ENCODE measurements at regions of chr7 and their contacts with region 1.

Region 1: DNA sequence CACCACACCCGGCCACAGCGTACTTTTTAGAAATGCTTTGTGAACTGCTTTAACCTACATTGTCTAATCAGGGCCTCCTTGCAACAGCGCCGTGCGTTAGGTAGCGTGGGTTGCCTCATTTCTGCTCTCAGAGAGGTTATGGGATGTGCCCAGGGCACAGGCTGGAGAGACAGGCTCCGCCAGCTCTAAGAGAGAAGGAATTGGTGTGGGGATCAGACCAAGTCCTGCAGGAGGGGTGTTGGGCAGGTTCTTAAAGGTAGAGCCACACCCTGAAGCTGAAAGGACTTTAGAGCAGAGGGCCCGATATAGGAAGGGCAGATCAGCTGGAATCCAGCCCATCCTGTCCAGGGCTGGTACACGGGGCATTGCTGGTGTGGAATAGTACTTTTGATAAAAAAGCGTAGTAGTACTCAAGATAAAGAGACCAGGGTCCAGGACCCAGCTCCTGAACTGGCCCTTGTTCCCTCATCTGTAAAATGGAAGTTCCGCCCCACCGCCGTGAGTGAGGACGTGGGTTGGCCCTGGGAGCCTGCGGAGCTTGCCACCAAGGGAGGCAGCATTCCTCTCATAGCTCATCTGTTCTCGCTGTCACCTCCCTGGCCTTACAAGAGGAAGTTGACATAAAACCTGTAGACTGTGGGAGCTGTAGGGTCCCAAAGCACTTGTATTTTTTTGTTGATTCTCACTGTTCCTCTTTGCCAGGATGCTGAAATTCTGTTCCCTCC is 37.2 kb downstream of the TMEM120A start:
- DNase-seq: peak; percentile 91 to 96
- H3K4me3 ChIP-seq: no peak overlapping the region
- H3K4me3 Mint-ChIP-seq: peak overlapping the region; percentile 71
- H3K27ac Mint-ChIP-seq: peak overlapping the region; percentile 94
- H3K4me1 ChIP-seq: peaks cover 48% of the 10 kb centered on the region
- H3K4me1 Mint-ChIP-seq: peaks cover 15% of the 10 kb centered on the region
- H3K27me3 ChIP-seq: no peaks in the 10 kb centered on the region
- H3K27me3 Mint-ChIP-seq: no peaks in the 10 kb centered on the region
- CTCF ChIP-seq: no peak

Region 2: GRCh38 chr7:75866489-75867389 is 90.4 kb before region 1 on chr7:
- CTCF ChIA-PET with region 1: interaction called, 11 read pairs
- POLR2A ChIA-PET with region 1: no interaction called
- intact Hi-C with region 1: no loop called
- DNase-seq: peak; percentile 71 to 76
- H3K4me3 ChIP-seq: no peak overlapping the region
- H3K4me3 Mint-ChIP-seq: no peak overlapping the region
- H3K27ac Mint-ChIP-seq: no peak overlapping the region
- H3K4me1 ChIP-seq: peaks cover 9% of the 10 kb centered on the region
- H3K4me1 Mint-ChIP-seq: peaks cover 11% of the 10 kb centered on the region
- H3K27me3 ChIP-seq: no peaks in the 10 kb centered on the region
- H3K27me3 Mint-ChIP-seq: peaks cover 2% of the 10 kb centered on the region
- CTCF ChIP-seq: peak; percentile 87 to 97

Region 3: GRCh38 chr7:75878769-75879611 is 78.2 kb before region 1 on chr7 and contains the start of gene RHBDD2:
- CTCF ChIA-PET with region 1: no interaction called
- POLR2A ChIA-PET with region 1: no interaction called
- intact Hi-C with region 1: loop called (anchors 5 kb)
- DNase-seq: peak; percentile 95
- H3K4me3 ChIP-seq: peak within 1 kb of the TSS; percentile 81
- H3K4me3 Mint-ChIP-seq: peak within 1 kb of the TSS; percentile 94
- H3K27ac Mint-ChIP-seq: peak within 1 kb of the TSS; percentile 93
- H3K4me1 ChIP-seq: peaks cover 6% of the 10 kb centered on the region
- H3K4me1 Mint-ChIP-seq: peaks cover 8% of the 10 kb centered on the region
- H3K27me3 ChIP-seq: no peaks in the 10 kb centered on the region
- H3K27me3 Mint-ChIP-seq: no peaks in the 10 kb centered on the region
- CTCF ChIP-seq: peak in 1 of 2 experiments; percentile 10
- total RNA-seq, gene RHBDD2: 50.1 and 55.6 TPM in 2 replicates

Region 4: DNA sequence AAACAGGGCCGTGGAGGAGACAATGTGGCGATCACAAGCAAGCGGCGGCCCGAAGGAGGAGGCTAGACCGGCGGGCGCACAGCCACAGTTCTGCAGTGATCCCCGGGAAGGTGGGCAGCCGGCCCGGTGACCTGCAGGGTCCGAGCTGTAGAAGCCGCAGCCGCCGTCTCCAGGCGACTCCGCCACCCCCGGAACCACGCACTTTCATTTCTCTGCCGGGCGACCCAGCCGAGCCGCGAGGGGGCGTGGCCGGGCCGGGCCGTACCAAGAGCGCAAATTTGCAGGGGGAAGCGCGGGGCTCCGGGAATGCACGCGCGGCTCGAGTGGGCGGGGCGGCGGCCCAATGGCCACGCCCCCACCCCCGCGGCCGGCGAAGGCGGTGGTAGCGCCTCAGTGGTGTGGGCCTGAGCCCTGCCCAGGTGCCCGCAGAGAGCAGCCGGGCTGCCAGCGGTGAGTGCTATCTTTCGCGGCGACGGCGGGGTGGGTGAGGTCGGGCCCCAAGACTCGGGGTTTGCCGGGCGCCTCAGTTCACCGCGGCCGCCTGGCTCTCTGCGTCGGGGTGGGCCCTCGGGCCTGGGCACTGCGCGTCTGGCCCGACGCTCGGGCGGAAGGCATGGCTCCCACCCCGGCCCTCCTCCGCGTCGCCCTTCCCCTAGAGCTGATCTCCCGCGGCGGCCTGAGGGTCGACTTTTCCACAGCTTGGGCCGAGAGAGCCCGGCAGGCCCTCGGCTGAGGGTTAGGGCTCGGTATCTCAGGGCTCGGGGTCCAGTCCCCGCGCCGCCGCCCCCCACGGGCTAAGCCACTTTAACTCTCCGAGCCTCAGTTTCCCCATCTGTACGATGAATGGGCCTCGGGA is 42.2 kb before region 1 on chr7 and contains the start of gene POR:
- CTCF ChIA-PET with region 1: interaction called, 4 read pairs
- POLR2A ChIA-PET with region 1: interaction called, 5 read pairs
- intact Hi-C with region 1: loop called (anchors 2 kb)
- DNase-seq: peak; percentile 94 to 99
- H3K4me3 ChIP-seq: peak within 1 kb of the TSS; percentile 95
- H3K4me3 Mint-ChIP-seq: peak within 1 kb of the TSS; percentile 73
- H3K27ac Mint-ChIP-seq: peak within 1 kb of the TSS; percentile 63
- H3K4me1 ChIP-seq: no peaks in the 10 kb centered on the region
- H3K4me1 Mint-ChIP-seq: no peaks in the 10 kb centered on the region
- H3K27me3 ChIP-seq: no peaks in the 10 kb centered on the region
- H3K27me3 Mint-ChIP-seq: no peaks in the 10 kb centered on the region
- CTCF ChIP-seq: no peak
- total RNA-seq, gene POR: 162 and 171 TPM in 2 replicates

Region 5: DNA sequence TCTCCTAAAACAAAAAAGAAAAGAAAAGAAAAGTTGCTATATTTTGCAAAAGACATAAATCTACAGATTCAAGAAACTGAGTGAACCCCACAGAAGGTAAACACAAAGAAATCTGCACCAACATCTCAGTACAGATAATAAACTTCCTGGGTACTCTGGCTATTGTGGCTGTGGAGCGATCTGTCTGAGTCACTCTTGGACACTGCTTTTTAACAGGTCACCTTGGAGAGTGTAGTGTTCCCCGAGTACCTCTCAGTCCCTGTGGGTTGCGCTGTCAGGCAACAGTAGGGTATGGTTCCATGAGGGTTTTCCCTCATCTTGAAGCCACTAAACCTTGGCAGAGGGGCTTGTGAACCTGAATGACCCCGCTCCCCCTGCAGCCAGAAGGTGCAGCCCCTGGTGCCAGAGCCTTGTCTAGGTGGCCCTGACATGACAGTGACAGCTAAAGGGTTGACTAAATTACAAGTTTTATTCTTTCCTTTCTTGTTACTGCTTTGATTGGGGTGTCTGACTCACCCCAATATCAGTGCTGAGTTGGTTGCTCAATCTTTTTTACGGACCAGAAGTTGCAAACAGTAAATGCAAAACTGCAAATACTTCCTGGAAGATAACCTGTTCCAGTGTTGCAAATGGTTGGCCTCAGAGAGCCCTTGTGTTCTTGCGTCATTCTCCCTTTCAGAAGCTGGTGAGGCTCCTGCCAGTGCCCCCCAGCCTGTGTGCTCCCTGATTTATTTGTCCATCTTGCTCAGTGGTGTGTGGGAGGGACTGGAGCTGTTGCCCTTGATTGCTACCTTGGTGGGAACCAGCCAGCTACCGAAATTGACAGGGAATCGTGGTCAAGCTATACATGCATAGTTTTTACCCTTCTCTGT is 11.6 kb before region 1 on chr7:
- CTCF ChIA-PET with region 1: no interaction called
- POLR2A ChIA-PET with region 1: no interaction called
- intact Hi-C with region 1: no loop called
- DNase-seq: peak; percentile 44 to 53
- H3K4me3 ChIP-seq: no peak overlapping the region
- H3K4me3 Mint-ChIP-seq: no peak overlapping the region
- H3K27ac Mint-ChIP-seq: peak overlapping the region; percentile 63
- H3K4me1 ChIP-seq: peaks cover 22% of the 10 kb centered on the region
- H3K4me1 Mint-ChIP-seq: peaks cover 24% of the 10 kb centered on the region
- H3K27me3 ChIP-seq: no peaks in the 10 kb centered on the region
- H3K27me3 Mint-ChIP-seq: no peaks in the 10 kb centered on the region
- CTCF ChIP-seq: no peak

Region 6: GRCh38 chr7:75994388-75995051 is 37.3 kb after region 1 on chr7 and contains the start of gene TMEM120A:
- CTCF ChIA-PET with region 1: no interaction called
- POLR2A ChIA-PET with region 1: interaction called, 3 read pairs
- intact Hi-C with region 1: loop called (anchors 1 kb)
- DNase-seq: peak; percentile 96 to 98
- H3K4me3 ChIP-seq: peak within 1 kb of the TSS; percentile 89
- H3K4me3 Mint-ChIP-seq: peak within 1 kb of the TSS; percentile 80
- H3K27ac Mint-ChIP-seq: peak within 1 kb of the TSS; percentile 87
- H3K4me1 ChIP-seq: peaks cover 40% of the 10 kb centered on the region
- H3K4me1 Mint-ChIP-seq: peaks cover 30% of the 10 kb centered on the region
- H3K27me3 ChIP-seq: no peaks in the 10 kb centered on the region
- H3K27me3 Mint-ChIP-seq: no peaks in the 10 kb centered on the region
- CTCF ChIP-seq: no peak
- total RNA-seq, gene TMEM120A: 65.4 and 71.1 TPM in 2 replicates

Measured in Caco-2 (cell line).